Right ventricle myocardium superior (tissue), 1 donor: ENCODE measurements at regions of chr11 and their contacts with region 1.

Region 1: DNA sequence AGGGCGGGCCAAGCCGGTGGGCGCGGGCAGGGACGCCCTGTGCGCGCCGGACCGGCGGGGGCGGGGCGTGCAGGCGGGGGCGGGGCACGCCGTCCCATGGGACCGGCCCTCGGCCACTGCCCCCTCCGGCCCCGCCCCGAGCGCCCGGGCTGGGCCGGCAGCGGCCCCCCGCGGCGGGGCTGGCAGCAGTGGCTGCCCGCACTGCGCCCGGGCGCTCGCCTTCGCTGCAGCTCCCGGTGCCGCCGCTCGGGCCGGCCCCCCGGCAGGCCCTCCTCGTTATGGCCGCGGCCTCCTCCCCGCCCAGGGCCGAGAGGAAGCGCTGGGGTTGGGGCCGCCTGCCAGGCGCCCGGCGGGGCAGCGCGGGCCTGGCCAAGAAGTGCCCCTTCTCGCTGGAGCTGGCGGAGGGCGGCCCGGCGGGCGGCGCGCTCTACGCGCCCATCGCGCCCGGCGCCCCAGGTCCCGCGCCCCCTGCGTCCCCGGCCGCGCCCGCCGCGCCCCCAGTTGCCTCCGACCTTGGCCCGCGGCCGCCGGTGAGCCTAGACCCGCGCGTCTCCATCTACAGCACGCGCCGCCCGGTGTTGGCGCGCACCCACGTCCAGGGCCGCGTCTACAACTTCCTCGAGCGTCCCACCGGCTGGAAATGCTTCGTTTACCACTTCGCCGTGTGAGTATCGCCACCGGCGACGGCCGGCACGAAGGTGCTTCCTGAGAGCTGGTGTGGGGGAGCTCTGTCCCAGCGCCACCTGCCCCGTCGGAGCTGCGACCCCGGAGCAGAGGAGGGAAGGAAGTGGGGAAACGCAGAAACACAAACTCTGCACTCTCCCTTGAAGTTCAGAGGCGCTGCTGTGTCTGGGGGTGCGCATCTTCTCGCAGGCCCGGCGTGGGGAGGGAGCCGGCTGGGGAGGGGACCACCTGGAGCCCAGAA is at the start of gene KCNQ1:
- DNase-seq: peak; percentile 77
- ATAC-seq: peak; percentile 78
- total RNA-seq, gene KCNQ1: 33.4 TPM

Region 2: GRCh38 chr11:2526808-2527381 is 81.8 kb after region 1 on chr11:
- intact Hi-C with region 1: loop called (anchors 5 kb)
- DNase-seq: peak; percentile 76
- ATAC-seq: peak; percentile 31

Region 3: DNA sequence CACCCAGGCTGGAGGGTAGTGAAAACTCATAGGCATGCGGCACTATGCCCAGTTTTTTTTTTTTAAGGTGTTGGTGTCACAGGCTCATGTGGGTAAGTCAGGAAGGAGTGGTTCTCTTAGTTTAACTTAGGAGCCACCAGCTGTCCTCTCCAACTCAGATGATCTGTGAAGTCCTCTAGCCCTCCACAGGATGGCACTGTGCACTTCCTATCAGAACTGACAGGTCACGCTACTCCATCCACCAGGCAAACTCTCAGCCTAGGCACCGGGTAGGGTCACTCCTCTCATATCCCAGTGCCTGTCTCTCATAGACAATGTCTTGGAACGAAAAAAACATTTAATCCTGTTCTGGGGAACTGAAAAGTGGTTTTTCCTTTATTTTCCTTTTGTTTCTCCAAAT is 530.5 kb after region 1 on chr11:
- intact Hi-C with region 1: loop called (anchors 5 kb)
- DNase-seq: no peak
- ATAC-seq: peak; percentile 73